Heart left ventricle (tissue), 16 donors: ENCODE measurements at regions of chr10 and their contacts with region 1.

Region 1: DNA sequence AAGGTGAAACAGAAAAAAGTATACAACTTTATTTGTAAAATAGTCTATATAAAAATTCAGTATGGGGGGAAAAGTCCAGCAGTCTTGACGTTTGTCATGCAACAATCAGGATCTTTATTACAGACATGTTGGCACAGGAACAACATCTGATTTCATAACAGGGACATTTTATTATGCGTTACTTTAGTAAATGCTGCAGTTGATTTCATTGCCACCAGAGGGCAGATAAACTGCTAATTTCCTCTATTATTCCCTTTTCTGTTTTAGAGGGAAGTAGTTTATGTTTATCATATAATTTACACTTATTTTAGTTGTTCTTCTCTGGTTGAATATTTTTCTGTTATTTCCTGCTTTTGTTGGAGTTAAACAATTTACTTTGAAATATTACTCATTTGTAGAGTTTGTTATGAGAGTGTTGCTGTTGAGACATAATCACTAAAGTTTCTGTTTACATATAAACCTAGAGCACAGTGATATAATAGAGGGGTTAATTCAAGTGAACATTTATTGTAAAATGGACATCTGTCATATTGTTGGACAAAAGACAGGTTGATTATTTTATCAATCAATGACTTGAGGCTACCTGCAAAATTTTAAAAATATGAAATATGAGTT is 3.3 kb downstream of the PLXDC2 start:
- DNase-seq: peak in 2 of 5 donors; percentile 50 to 53
- ATAC-seq: no peak
- H3K4me3 ChIP-seq: peak overlapping the region in 9 of 12 donors; percentile 67 to 95 (median 84)
- H3K27ac ChIP-seq: peak overlapping the region in 9 of 12 donors; percentile 7 to 87 (median 36)
- H3K4me1 ChIP-seq: peaks cover 0 to 30% (median 13%) of the 10 kb centered on the region in 12 donors
- H3K27me3 ChIP-seq: peaks cover 0 to 18% (median 0%) of the 10 kb centered on the region in 9 donors
- CTCF ChIP-seq: peak; percentile 72 to 93 (median 86)
- POLR2A ChIP-seq: no peak

Region 2: GRCh38 chr10:19505320-19506312 is 313.9 kb before region 1 on chr10:
- intact Hi-C with region 1: no loop called
- DNase-seq: no peak
- ATAC-seq: no peak
- H3K4me3 ChIP-seq: no peak overlapping the region
- H3K27ac ChIP-seq: no peak overlapping the region
- H3K4me1 ChIP-seq: no peaks in the 10 kb centered on the region
- H3K27me3 ChIP-seq: no peaks in the 10 kb centered on the region
- CTCF ChIP-seq: no peak
- POLR2A ChIP-seq: no peak

Region 3: GRCh38 chr10:19629567-19629966 is 190.0 kb before region 1 on chr10:
- intact Hi-C with region 1: loop called in 2 of 10 experiments (anchors 10 kb)
- DNase-seq: peak; percentile 69 to 86 (median 73)
- ATAC-seq: peak; percentile 92 to 97 (median 95)
- H3K4me3 ChIP-seq: no peak overlapping the region
- H3K27ac ChIP-seq: peak overlapping the region in 8 of 12 donors; percentile 15 to 64 (median 38)
- H3K4me1 ChIP-seq: peaks cover 0 to 12% (median 0%) of the 10 kb centered on the region in 12 donors
- H3K27me3 ChIP-seq: no peaks in the 10 kb centered on the region
- CTCF ChIP-seq: peak in 6 of 12 donors; percentile 17 to 52 (median 27)
- POLR2A ChIP-seq: no peak

Region 4: GRCh38 chr10:19944911-19945663 is 125.6 kb after region 1 on chr10:
- intact Hi-C with region 1: loop called in 8 of 10 experiments (anchors 5 to 10 kb)
- DNase-seq: peak in 2 of 5 donors; percentile 24 to 64
- ATAC-seq: peak; percentile 24 to 81 (median 65)
- H3K4me3 ChIP-seq: no peak overlapping the region
- H3K27ac ChIP-seq: peak overlapping the region in 11 of 12 donors; percentile 6 to 61 (median 39)
- H3K4me1 ChIP-seq: peaks cover 5 to 64% (median 37%) of the 10 kb centered on the region in 12 donors
- H3K27me3 ChIP-seq: no peaks in the 10 kb centered on the region
- CTCF ChIP-seq: no peak
- POLR2A ChIP-seq: no peak

Region 5: GRCh38 chr10:20004087-20004523 is 184.6 kb after region 1 on chr10:
- intact Hi-C with region 1: loop called in 3 of 10 experiments (anchors 10 kb)
- DNase-seq: peak; percentile 24 to 73 (median 67)
- ATAC-seq: peak; percentile 43 to 73 (median 56)
- H3K4me3 ChIP-seq: no peak overlapping the region
- H3K27ac ChIP-seq: peak overlapping the region; percentile 42 to 95 (median 62)
- H3K4me1 ChIP-seq: peaks cover 0 to 57% (median 27%) of the 10 kb centered on the region in 12 donors
- H3K27me3 ChIP-seq: no peaks in the 10 kb centered on the region
- CTCF ChIP-seq: no peak
- POLR2A ChIP-seq: no peak

Region 6: GRCh38 chr10:20094226-20094976 is 274.9 kb after region 1 on chr10:
- intact Hi-C with region 1: loop called in 2 of 10 experiments (anchors 5 to 10 kb)
- DNase-seq: no peak
- ATAC-seq: no peak
- H3K4me3 ChIP-seq: no peak overlapping the region
- H3K27ac ChIP-seq: no peak overlapping the region
- H3K4me1 ChIP-seq: peaks cover 0 to 23% (median 4%) of the 10 kb centered on the region in 12 donors
- H3K27me3 ChIP-seq: no peaks in the 10 kb centered on the region
- CTCF ChIP-seq: no peak
- POLR2A ChIP-seq: no peak

Region 7: GRCh38 chr10:20276127-20276979 is 456.8 kb after region 1 on chr10:
- intact Hi-C with region 1: loop called in 1 of 10 experiments (anchors 10 kb)
- DNase-seq: no peak
- ATAC-seq: no peak
- H3K4me3 ChIP-seq: no peak overlapping the region
- H3K27ac ChIP-seq: no peak overlapping the region
- H3K4me1 ChIP-seq: no peaks in the 10 kb centered on the region
- H3K27me3 ChIP-seq: no peaks in the 10 kb centered on the region
- CTCF ChIP-seq: no peak
- POLR2A ChIP-seq: no peak

Region 8: DNA sequence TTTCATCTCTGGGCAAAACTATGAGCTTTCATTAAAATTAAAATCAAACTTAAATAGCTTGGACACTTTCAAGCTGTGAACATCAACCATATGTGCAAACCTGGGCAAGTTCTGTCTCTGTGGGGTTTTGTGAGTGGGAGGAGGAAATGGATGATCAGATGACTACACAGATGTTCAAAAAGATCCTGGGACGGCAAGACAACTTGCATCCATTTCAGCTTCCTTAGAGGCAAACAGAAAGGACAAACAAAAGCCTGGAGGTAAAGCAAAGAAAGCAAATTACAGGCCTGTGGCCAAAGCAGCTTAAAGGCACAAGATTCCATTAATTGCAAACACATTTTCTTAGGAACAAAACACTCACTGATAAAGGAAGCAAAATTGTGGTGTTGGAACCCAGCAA is 855.4 kb after region 1 on chr10:
- intact Hi-C with region 1: loop called in 1 of 10 experiments (anchors 5 kb)
- DNase-seq: peak in 1 of 5 donors; percentile 8
- ATAC-seq: peak in 2 of 4 donors; percentile 23 to 35
- H3K4me3 ChIP-seq: no peak overlapping the region
- H3K27ac ChIP-seq: peak overlapping the region in 6 of 12 donors; percentile 7 to 39 (median 32)
- H3K4me1 ChIP-seq: peaks cover 0 to 34% (median 11%) of the 10 kb centered on the region in 12 donors
- H3K27me3 ChIP-seq: no peaks in the 10 kb centered on the region
- CTCF ChIP-seq: no peak
- POLR2A ChIP-seq: no peak